ENCODE measurements at regions of chr12 and their contacts with region 1.

Region 1: DNA sequence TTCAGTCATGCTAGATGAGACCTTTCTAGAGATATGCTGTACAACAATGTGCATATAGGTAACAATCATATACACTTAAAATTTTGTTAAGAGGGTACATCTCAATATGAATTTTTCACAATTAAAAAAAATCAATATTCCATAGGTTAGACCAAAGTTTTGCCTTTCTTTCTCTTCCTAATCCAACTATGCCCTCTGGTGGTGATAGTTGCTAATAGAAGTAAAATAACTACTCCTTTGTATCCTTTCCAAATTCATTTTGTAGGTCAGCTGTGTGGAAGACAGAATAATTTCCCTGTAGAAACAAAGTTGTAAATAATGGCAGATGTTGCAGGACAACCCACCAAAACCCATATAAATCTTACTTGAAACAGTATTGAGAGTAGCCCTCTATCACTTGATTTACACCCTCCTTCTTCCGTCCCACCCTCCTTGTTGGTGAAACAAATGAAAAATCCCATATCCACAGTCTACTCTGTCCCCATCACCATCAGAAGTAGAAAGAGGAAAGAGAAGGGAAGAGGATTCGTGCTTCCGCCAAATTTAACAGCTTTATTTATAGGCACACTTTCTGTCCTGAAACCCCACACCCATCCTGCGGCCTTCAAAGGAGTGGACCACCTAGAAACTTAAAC is 34.2 kb upstream of the KICS2 start:
- DNase-seq: no peak
- ATAC-seq: peak; percentile 44 to 55

Region 2: DNA sequence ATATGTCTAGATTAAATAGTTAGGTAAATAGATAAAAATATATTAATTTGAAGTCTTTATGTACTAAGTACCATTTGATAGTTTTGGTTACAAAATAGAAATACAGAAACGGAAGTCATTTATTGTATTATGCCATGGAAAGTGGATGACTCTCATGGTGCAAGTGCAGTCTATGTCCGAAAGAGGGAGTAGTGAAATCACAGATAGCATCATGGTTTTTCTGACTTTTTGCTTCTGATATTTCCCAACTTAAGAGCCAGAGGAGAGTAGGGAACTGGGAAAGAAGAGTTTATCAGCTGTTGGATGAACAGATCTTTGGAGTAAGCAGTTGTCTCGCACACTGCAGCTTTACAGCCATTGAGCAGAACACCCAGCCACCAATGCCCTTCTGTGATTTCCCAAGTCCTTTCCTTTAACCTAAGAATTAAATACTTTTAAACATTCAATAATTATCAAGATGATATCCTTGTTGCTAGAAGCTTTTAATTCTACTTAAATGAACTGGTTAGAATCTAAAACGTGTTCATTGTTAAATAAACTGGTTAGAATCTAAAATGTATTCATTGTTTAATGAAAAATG is 430.2 kb before region 1 on chr12:
- intact Hi-C with region 1: loop called in 1 of 2 experiments (anchors 5 kb)
- DNase-seq: no peak
- ATAC-seq: peak; percentile 38 to 63

Region 3: GRCh38 chr12:63836936-63837335 is 419.3 kb before region 1 on chr12:
- intact Hi-C with region 1: loop called (anchors 2 kb)
- DNase-seq: no peak
- ATAC-seq: no peak

Region 4: GRCh38 chr12:64181504-64182291 is 74.6 kb before region 1 on chr12:
- intact Hi-C with region 1: loop called in 1 of 2 experiments (anchors 10 kb)
- DNase-seq: peak; percentile 47
- ATAC-seq: peak; percentile 92 to 94

Region 5: DNA sequence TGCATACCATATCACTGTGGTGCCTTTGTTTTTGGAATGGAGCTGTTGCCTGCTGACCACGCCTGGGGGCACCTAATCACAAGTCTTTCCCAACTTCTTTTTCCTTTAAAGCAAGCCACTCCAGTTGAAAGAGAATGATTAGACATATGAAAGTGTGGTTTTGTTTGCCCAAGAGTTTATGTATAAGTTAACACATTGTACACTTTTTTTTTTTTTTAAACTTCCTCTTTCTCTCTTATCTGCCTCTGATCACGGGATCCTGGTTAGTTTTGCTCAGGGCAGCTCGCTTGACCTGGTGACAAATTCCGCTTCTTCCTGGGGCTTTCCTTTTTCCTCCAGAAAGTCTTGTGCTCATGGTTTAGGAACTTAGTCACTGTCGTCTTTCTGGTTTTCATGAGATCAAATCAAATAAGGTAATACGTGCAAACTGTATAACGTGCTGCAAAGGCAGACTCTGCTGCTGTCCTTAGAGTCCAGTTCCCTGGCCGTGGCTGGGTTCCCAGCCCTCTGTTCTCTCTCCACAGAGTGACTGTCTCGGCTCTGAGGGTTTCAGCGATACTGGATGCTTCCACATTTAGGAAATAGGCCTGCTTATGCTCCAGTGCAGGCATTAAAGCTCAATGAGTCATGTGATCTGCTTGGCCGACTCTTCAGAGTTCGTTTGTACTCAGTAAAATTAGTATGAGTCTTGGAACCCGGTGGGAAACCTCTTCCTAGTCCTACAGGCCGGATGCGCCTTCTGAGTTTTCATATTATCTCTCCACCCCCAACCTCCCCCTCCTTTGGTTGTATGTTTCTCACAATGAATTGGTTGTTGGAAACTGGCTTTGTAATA is 369.2 kb after region 1 on chr12:
- intact Hi-C with region 1: no loop called
- DNase-seq: peak; percentile 75
- ATAC-seq: peak; percentile 89 to 90